Caco-2 (cell line): ENCODE measurements at regions of chr9 and their contacts with region 1.

Region 1: GRCh38 chr9:4497855-4498254 is 7.6 kb downstream of the SLC1A1 start:
- DNase-seq: peak; percentile 58 to 69
- H3K4me3 ChIP-seq: no peak overlapping the region
- H3K4me3 Mint-ChIP-seq: no peak overlapping the region
- H3K27ac Mint-ChIP-seq: no peak overlapping the region
- H3K4me1 ChIP-seq: peaks cover 82% of the 10 kb centered on the region
- H3K4me1 Mint-ChIP-seq: peaks cover 40% of the 10 kb centered on the region
- H3K27me3 ChIP-seq: no peaks in the 10 kb centered on the region
- H3K27me3 Mint-ChIP-seq: no peaks in the 10 kb centered on the region
- CTCF ChIP-seq: no peak

Region 2: DNA sequence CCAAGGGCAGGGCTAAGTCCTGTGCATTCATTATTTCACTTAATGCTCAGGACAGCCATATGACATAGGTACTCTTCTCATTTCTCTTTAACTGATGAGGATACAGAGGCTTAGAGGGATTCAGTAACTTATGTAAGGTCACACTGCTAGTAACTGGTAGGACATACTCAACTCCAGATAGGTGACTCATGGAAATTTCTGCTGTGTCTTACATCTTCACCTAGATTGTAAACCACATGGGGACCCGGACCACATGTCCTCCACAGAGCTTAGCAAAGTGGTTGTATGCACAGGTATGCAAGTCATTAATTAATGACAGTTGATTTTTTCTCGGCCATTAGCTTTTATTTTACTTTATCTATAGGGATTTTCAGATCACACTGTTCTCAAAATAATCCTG is 21.7 kb after region 1 on chr9:
- CTCF ChIA-PET with region 1: no interaction called
- POLR2A ChIA-PET with region 1: no interaction called
- intact Hi-C with region 1: no loop called
- DNase-seq: no peak
- H3K4me3 ChIP-seq: no peak overlapping the region
- H3K4me3 Mint-ChIP-seq: no peak overlapping the region
- H3K27ac Mint-ChIP-seq: no peak overlapping the region
- H3K4me1 ChIP-seq: no peaks in the 10 kb centered on the region
- H3K4me1 Mint-ChIP-seq: peaks cover under 1% of the 10 kb centered on the region
- H3K27me3 ChIP-seq: no peaks in the 10 kb centered on the region
- H3K27me3 Mint-ChIP-seq: no peaks in the 10 kb centered on the region
- CTCF ChIP-seq: no peak

Region 3: GRCh38 chr9:4541856-4542255 is 44.0 kb after region 1 on chr9:
- CTCF ChIA-PET with region 1: no interaction called
- POLR2A ChIA-PET with region 1: no interaction called
- intact Hi-C with region 1: loop called (anchors 2 kb)
- DNase-seq: no peak
- H3K4me3 ChIP-seq: no peak overlapping the region
- H3K4me3 Mint-ChIP-seq: no peak overlapping the region
- H3K27ac Mint-ChIP-seq: no peak overlapping the region
- H3K4me1 ChIP-seq: peaks cover 41% of the 10 kb centered on the region
- H3K4me1 Mint-ChIP-seq: peaks cover 32% of the 10 kb centered on the region
- H3K27me3 ChIP-seq: no peaks in the 10 kb centered on the region
- H3K27me3 Mint-ChIP-seq: no peaks in the 10 kb centered on the region
- CTCF ChIP-seq: no peak

Region 4: GRCh38 chr9:4604678-4605095 is 106.8 kb after region 1 on chr9:
- CTCF ChIA-PET with region 1: no interaction called
- POLR2A ChIA-PET with region 1: no interaction called
- intact Hi-C with region 1: no loop called
- DNase-seq: peak; percentile 63 to 73
- H3K4me3 ChIP-seq: no peak overlapping the region
- H3K4me3 Mint-ChIP-seq: no peak overlapping the region
- H3K27ac Mint-ChIP-seq: no peak overlapping the region
- H3K4me1 ChIP-seq: no peaks in the 10 kb centered on the region
- H3K4me1 Mint-ChIP-seq: no peaks in the 10 kb centered on the region
- H3K27me3 ChIP-seq: no peaks in the 10 kb centered on the region
- H3K27me3 Mint-ChIP-seq: no peaks in the 10 kb centered on the region
- CTCF ChIP-seq: peak; percentile 39 to 50

Region 5: DNA sequence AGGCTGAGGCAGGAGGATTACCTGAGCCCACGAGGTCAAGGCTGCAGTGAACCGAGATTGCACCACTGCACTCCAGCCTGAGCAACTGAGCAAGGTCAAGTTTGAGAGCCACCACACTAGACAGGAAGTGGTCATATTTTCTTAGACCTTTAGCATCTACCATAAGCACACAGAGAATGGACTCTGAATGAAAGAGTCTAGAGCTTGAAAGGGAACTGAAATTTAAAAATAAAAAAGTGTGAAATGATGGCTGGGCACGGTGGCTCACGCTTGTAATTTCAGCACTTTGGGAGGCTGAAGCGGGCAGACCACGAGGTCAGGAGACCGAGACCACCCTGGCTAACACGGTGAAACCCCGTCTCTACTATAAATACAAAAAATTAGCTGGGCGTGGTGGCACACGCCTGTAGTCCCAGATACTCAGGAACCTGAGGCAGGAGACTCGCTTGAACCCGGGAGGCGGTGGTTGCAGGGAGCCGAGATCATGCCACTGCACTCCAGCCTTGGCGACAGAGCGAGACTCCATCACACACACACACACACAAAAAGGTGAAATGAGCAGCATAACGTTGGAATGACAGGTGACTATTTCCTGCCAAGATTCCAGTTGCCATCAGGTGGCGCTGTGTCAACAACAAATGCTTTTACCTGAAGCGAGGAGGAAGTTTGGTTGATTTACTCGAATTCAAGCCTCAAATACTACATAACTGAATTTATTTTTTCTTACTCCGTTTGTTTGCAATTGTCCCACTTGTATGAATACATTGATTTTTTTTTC is 264.4 kb after region 1 on chr9:
- CTCF ChIA-PET with region 1: no interaction called
- POLR2A ChIA-PET with region 1: no interaction called
- intact Hi-C with region 1: no loop called
- DNase-seq: peak; percentile 55 to 70
- H3K4me3 ChIP-seq: no peak overlapping the region
- H3K4me3 Mint-ChIP-seq: peak overlapping the region; percentile 25
- H3K27ac Mint-ChIP-seq: no peak overlapping the region
- H3K4me1 ChIP-seq: 0 out of 2 replicates have a peak, but pooled peaks cover 3% of the 10 kb centered on the region
- H3K4me1 Mint-ChIP-seq: no peaks in the 10 kb centered on the region
- H3K27me3 ChIP-seq: no peaks in the 10 kb centered on the region
- H3K27me3 Mint-ChIP-seq: peaks cover 10% of the 10 kb centered on the region
- CTCF ChIP-seq: peak; percentile 65 to 78

Region 6: GRCh38 chr9:4849364-4849763 is 351.5 kb after region 1 on chr9:
- CTCF ChIA-PET with region 1: no interaction called
- POLR2A ChIA-PET with region 1: no interaction called
- intact Hi-C with region 1: no loop called
- DNase-seq: no peak
- H3K4me3 ChIP-seq: no peak overlapping the region
- H3K4me3 Mint-ChIP-seq: no peak overlapping the region
- H3K27ac Mint-ChIP-seq: no peak overlapping the region
- H3K4me1 ChIP-seq: no peaks in the 10 kb centered on the region
- H3K4me1 Mint-ChIP-seq: no peaks in the 10 kb centered on the region
- H3K27me3 ChIP-seq: no peaks in the 10 kb centered on the region
- H3K27me3 Mint-ChIP-seq: no peaks in the 10 kb centered on the region
- CTCF ChIP-seq: no peak